ENCODE measurements at regions of chr19 and their contacts with region 1.

Region 1: GRCh38 chr19:40662921-40663694 is 27.3 kb downstream of the NUMBL start:
- DNase-seq: peak; percentile 85 to 98 (median 90)
- ATAC-seq: peak; percentile 94
- H3K4me3 ChIP-seq: peak overlapping the region; percentile 70 to 71
- H3K27ac ChIP-seq: peak overlapping the region; percentile 79 to 85
- H3K4me1 ChIP-seq: peaks cover 0 to 17% of the 10 kb centered on the region in 2 donors
- H3K27me3 ChIP-seq: no peaks in the 10 kb centered on the region
- CTCF ChIP-seq: peak in 1 of 2 donors; percentile 21

Region 2: GRCh38 chr19:40502647-40503319 is 160.3 kb before region 1 on chr19:
- intact Hi-C with region 1: no loop called
- DNase-seq: no peak
- ATAC-seq: no peak
- H3K4me3 ChIP-seq: no peak overlapping the region
- H3K27ac ChIP-seq: no peak overlapping the region
- H3K4me1 ChIP-seq: no peaks in the 10 kb centered on the region
- H3K27me3 ChIP-seq: peaks cover 0 to 15% of the 10 kb centered on the region in 2 donors
- CTCF ChIP-seq: no peak

Region 3: DNA sequence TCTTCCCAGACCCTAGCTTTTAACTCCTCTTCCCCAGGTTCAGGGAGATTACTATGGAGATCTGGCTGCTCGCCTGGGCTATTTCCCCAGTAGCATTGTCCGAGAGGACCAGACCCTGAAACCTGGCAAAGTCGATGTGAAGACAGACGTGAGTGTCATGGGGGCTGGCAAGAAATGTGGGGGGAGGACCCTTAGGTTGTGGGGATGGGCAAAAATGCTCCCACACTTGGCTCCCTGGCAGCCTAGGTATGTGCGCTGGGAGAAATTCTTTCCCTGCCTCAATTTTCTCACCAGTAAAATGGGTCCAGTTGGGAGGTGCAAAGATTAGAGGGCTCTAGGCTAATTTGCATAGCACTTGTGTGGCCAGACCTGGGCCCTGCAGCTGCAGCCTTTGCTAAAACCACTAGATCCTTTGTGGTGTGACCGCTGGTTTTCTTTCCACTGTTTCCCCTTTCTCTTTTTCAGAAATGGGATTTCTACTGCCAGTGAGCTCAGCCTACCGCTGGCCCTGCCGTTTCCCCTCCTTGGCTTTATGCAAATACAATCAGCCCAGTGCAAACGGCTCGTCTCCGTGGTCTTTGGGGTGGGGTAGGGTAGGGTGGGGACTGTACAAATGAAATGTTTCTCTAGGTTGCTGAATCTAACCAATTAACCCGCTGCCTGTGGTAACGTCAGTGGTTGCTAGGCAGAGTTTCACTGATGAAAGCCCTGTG is 114.0 kb after region 1 on chr19:
- intact Hi-C with region 1: no loop called
- DNase-seq: peak in 3 of 4 donors; percentile 89 to 95 (median 92)
- ATAC-seq: peak; percentile 81
- H3K4me3 ChIP-seq: peak overlapping the region; percentile 59 to 74
- H3K27ac ChIP-seq: peak overlapping the region; percentile 96 to 98
- H3K4me1 ChIP-seq: peaks cover 7 to 22% of the 10 kb centered on the region in 2 donors
- H3K27me3 ChIP-seq: no peaks in the 10 kb centered on the region
- CTCF ChIP-seq: peak in 1 of 2 donors; percentile 29

Region 4: DNA sequence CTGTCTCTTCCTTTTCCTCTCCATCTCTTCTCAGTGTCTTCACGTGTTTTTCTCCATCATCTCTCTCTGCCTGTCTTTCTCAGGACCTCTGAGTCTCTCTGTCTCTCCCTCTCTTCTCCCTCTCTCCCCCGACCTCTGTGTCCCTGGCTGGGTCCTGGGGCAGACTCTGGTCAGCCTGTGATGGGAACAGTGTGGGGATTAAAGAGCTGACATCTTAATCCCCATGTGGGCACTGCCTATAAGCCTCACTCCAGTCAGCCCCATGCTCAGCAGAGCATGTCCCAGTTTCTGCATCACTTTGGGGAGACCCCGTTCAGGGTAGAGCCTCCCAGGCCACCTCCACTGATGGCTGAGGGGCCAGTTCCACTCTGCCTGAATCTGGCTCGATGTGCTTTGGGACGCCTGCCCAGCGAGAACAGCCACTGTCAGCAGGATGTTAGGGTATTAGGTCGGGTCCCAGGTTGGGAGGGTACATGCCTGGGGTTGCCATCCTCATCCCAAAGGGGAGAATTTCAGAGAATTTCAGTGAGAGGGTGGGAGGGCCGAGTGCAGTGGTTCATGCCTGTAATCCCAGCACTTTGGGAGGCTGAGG is 152.2 kb after region 1 on chr19:
- intact Hi-C with region 1: loop called in 1 of 2 experiments (anchors 5 kb)
- DNase-seq: no peak
- ATAC-seq: no peak
- H3K4me3 ChIP-seq: no peak overlapping the region
- H3K27ac ChIP-seq: no peak overlapping the region
- H3K4me1 ChIP-seq: peaks cover 9 to 44% of the 10 kb centered on the region in 2 donors
- H3K27me3 ChIP-seq: no peaks in the 10 kb centered on the region
- CTCF ChIP-seq: no peak

Region 5: GRCh38 chr19:41144403-41144802 is 481.3 kb after region 1 on chr19:
- intact Hi-C with region 1: loop called in 1 of 2 experiments (anchors 10 kb)
- DNase-seq: peak in 3 of 4 donors; percentile 23 to 79 (median 60)
- ATAC-seq: peak; percentile 97
- H3K4me3 ChIP-seq: no peak overlapping the region
- H3K27ac ChIP-seq: no peak overlapping the region
- H3K4me1 ChIP-seq: no peaks in the 10 kb centered on the region
- H3K27me3 ChIP-seq: peaks cover 0 to 10% of the 10 kb centered on the region in 2 donors
- CTCF ChIP-seq: peak; percentile 80 to 85